Activated CD4-positive, alpha-beta memory T cell treated with anti-CD3 and anti-CD28 coated beads, Interleukin-2, amount 10 ng/mL, durations not matched to agents 7 days and 5 days (primary cell): ENCODE measurements at regions of chr20 and their contacts with region 1.

Region 1: DNA sequence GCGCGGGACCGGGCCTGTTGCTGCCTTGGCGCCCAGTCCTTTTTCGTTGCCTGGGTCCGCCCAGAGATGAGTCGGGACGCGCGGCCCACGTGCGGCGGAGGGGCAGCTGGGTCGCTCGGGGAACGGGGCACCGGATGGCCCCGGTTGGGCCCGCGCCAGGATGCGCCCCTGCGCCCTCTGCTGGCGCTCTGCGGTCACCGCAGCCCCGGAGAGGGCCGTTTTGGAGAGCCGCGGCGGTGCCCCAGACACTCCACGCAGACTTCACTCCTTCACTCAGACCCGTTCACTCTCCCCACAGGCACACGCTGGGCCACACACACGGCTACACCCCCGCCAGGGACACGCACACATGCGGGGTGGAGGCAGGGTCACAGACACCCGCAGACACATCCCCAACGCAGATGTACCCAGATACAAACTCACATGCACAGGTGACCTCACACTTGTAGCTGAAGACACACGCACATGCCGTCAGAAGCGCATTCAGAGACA is 38.8 kb downstream of the SRC start:
- DNase-seq: peak; percentile 82
- H3K4me3 Mint-ChIP-seq: peak overlapping the region; percentile 73
- H3K27ac Mint-ChIP-seq: peak overlapping the region; percentile 48
- H3K4me1 Mint-ChIP-seq: peaks cover 6% of the 10 kb centered on the region
- H3K27me3 Mint-ChIP-seq: peaks cover 4% of the 10 kb centered on the region

Region 2: GRCh38 chr20:37270576-37271420 is 113.9 kb before region 1 on chr20:
- CTCF ChIA-PET with region 1: interaction called, 11 read pairs
- POLR2A ChIA-PET with region 1: no interaction called
- DNase-seq: no peak
- H3K4me3 Mint-ChIP-seq: no peak overlapping the region
- H3K27ac Mint-ChIP-seq: no peak overlapping the region
- H3K4me1 Mint-ChIP-seq: peaks cover 1% of the 10 kb centered on the region
- H3K27me3 Mint-ChIP-seq: peaks cover 2% of the 10 kb centered on the region

Region 3: GRCh38 chr20:37373020-37373598 is 11.6 kb before region 1 on chr20:
- CTCF ChIA-PET with region 1: interaction called, 10 read pairs
- POLR2A ChIA-PET with region 1: no interaction called
- DNase-seq: no peak
- H3K4me3 Mint-ChIP-seq: no peak overlapping the region
- H3K27ac Mint-ChIP-seq: no peak overlapping the region
- H3K4me1 Mint-ChIP-seq: peaks cover 9% of the 10 kb centered on the region
- H3K27me3 Mint-ChIP-seq: no peaks in the 10 kb centered on the region